ENCODE measurements at regions of chr12 and their contacts with region 1.

Region 1: GRCh38 chr12:8681041-8681902 is 16.5 kb upstream of the RIMKLB start:
- DNase-seq: peak; percentile 94
- H3K4me3 ChIP-seq: peak overlapping the region in 1 of 3 experiments; percentile 17
- H3K27ac ChIP-seq: peak overlapping the region; percentile 78
- H3K4me1 ChIP-seq: peaks cover 30% of the 10 kb centered on the region
- H3K27me3 ChIP-seq: no peaks in the 10 kb centered on the region
- CTCF ChIP-seq: no peak

Region 2: GRCh38 chr12:8572507-8572906 is 108.8 kb before region 1 on chr12:
- CTCF ChIA-PET with region 1: interaction called, 10 read pairs
- dilution Hi-C with region 1: no loop called
- in situ Hi-C with region 1: no loop called
- intact Hi-C with region 1: no loop called
- DNase-seq: peak; percentile 12
- H3K4me3 ChIP-seq: no peak overlapping the region
- H3K27ac ChIP-seq: no peak overlapping the region
- H3K4me1 ChIP-seq: no peaks in the 10 kb centered on the region
- H3K27me3 ChIP-seq: no peaks in the 10 kb centered on the region
- CTCF ChIP-seq: no peak

Region 3: DNA sequence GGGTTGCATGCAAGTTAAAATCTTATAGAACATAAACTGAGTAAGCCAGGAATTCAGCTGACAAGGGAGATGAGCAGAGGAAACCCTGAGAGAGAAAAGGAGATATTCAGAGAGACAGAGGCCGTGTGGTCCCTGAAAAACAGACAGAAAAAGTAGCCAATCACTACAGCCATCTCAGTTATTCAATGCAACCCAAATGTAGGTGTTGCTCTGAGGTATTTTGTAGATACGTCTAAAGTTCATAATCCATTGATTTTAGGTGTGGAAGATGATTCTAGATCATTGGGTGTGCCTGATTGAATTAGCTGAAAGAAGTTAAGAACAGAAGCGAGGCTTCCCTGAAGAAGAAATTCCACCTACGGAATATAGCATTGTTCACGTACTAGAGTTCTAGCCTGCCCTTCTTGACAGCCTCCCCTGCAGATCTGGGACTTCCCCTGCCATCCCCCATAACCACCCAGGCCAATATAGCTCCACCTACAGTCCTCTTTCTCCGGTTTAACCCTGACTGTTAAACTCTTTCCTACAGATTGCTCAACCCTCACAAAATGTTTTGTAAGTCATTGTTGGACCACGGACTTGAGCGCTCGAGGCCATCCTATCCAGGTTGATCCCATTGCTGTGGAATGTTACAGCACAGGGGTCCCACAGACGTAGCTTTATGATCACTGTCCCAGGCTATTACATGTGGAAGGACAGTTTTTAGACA is 90.3 kb before region 1 on chr12:
- CTCF ChIA-PET with region 1: no interaction called
- dilution Hi-C with region 1: no loop called
- in situ Hi-C with region 1: no loop called
- intact Hi-C with region 1: no loop called
- DNase-seq: peak; percentile 40
- H3K4me3 ChIP-seq: no peak overlapping the region
- H3K27ac ChIP-seq: no peak overlapping the region
- H3K4me1 ChIP-seq: peaks cover 4% of the 10 kb centered on the region
- H3K27me3 ChIP-seq: no peaks in the 10 kb centered on the region
- CTCF ChIP-seq: peak in 1 of 2 donors; percentile 16

Region 4: DNA sequence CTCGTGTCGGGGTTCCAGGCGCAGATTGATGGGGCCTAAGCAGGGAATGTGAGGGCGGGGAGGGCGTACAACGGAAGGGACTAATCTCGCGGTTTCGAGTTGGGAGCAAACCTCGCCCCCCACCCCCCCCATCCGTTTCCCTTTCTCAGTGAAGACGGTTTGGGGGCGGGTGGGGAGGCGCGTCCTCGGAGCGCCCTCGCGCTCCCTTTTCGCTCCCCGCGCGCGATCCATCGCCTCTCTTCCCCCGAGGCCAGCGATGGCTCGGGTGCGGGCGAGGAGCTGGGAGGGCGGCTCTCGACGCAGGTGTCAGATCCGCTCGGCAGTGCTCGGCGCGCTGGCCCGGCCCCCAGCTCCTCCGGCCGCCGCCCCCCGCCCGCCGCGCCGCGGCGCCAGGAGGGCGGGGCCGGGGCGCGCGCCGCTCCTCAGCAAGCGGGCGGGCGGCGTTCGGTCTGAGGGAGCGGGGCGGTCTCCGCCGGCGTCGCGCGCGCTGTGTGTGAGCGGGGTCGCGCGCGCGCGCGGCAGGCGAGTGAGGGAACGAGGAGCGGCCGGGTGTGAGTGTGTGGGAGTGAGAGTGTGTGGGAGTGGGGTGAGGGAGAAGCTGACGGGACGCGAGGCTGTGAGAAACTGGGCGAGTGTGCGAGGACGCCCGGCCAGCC is 16.3 kb after region 1 on chr12 and contains the start of gene RIMKLB:
- CTCF ChIA-PET with region 1: no interaction called
- dilution Hi-C with region 1: no loop called
- in situ Hi-C with region 1: no loop called
- intact Hi-C with region 1: loop called (anchors 2 kb)
- DNase-seq: peak; percentile 78
- H3K4me3 ChIP-seq: peak within 1 kb of the TSS; percentile 97 to 98 (median 97)
- H3K27ac ChIP-seq: peak within 1 kb of the TSS; percentile 85
- H3K4me1 ChIP-seq: peaks cover 14% of the 10 kb centered on the region
- H3K27me3 ChIP-seq: no peaks in the 10 kb centered on the region
- CTCF ChIP-seq: no peak
- total RNA-seq, gene RIMKLB: 27.2 to 30.2 TPM

Region 5: DNA sequence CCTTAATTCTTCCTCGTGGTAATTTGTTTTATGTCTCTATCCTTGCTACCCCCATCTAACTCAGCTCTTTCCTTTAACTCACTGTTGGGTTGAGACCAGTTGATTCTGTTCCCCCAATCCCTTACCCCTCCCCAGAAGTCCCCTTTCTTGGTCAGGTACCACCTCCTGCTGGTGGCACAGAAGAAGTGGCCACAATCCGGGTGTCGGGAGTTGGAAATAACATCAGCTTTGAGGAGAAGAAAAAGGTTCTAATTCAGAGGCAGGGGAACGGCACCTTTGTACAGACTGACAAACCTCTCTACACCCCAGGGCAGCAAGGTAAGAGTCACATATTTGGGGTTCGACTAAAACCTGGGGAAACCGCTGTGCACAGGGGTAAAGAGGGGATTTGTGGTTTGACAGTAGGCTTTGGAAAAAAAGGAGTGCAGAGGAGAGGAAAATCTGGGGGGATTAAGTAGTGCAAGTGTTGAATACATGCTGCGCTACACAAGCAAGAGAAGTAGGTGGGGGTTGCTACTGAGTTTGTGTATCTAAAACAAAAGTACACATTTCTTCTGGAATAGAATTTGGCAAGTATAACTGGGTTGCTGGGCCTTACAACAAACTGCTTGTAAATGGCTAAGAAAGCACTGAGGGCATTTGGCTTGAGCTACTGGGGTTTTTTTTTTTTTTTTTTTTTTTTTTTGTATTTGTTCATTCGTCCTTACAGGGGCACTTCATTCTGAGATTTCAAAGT is 142.5 kb after region 1 on chr12:
- CTCF ChIA-PET with region 1: interaction called, 4 read pairs
- dilution Hi-C with region 1: no loop called
- in situ Hi-C with region 1: no loop called
- intact Hi-C with region 1: loop called (anchors 1 kb)
- DNase-seq: no peak
- H3K4me3 ChIP-seq: no peak overlapping the region
- H3K27ac ChIP-seq: peak overlapping the region; percentile 82
- H3K4me1 ChIP-seq: peaks cover 38% of the 10 kb centered on the region
- H3K27me3 ChIP-seq: no peaks in the 10 kb centered on the region
- CTCF ChIP-seq: peak; percentile 39 to 51

Region 6: GRCh38 chr12:8890313-8891085 is 209.2 kb after region 1 on chr12:
- CTCF ChIA-PET with region 1: interaction called, 11 read pairs
- dilution Hi-C with region 1: no loop called
- in situ Hi-C with region 1: loop called in 1 of 2 experiments (anchors 10 kb)
- intact Hi-C with region 1: loop called (anchors 1 kb)
- DNase-seq: peak; percentile 17
- H3K4me3 ChIP-seq: peak overlapping the region; percentile 47 to 69 (median 48)
- H3K27ac ChIP-seq: no peak overlapping the region
- H3K4me1 ChIP-seq: no peaks in the 10 kb centered on the region
- H3K27me3 ChIP-seq: no peaks in the 10 kb centered on the region
- CTCF ChIP-seq: peak; percentile 63 to 84

Region 7: DNA sequence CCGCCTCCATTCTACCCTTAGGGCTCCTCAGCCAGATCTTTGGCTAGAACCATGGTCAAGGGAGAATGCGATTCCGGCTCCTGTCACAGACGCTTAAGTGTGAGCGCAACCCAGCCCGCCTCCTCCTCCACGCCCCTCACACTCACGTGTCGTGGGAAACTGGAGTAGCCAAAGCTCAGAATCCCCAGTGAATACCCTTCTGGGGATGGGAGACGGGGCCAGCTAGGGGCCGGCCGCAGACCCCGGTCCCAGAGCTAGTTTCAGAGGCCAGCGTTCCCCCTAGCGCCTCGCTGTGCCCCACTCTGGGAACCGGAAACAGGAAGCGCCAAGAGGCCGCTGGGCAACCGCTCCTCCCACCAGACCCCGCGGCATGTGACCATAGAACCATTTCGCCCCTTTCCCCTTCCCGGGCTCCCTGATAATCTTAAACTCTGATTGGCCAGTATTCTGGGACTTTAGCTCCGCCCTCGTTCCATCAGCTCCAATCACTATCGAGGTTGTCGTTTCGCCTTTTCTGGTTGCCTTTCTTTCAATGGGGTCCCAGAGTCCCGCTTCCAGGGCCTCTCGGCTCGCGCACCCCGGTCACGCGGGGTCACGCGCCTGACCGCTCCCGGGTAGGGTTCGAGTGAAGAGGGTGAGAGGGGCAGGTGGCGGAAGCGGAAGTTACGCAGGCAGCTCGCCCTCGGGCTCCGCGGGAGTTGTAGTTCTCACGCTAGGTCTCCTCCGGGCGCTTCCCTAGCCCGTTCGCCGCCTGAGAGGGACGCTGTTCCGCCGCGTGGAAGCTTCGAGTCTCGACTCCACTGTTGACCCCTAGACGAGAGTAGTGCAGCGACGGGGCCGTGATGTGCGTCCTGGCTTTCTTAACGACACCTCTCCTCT is 268.3 kb after region 1 on chr12 and contains the start of gene M6PR:
- CTCF ChIA-PET with region 1: no interaction called
- dilution Hi-C with region 1: no loop called
- in situ Hi-C with region 1: no loop called
- intact Hi-C with region 1: loop called (anchors 5 kb)
- DNase-seq: peak; percentile 97
- H3K4me3 ChIP-seq: peak within 1 kb of the TSS; percentile 72 to 97 (median 96)
- H3K27ac ChIP-seq: peak within 1 kb of the TSS; percentile 92
- H3K4me1 ChIP-seq: peaks cover 8% of the 10 kb centered on the region
- H3K27me3 ChIP-seq: no peaks in the 10 kb centered on the region
- CTCF ChIP-seq: peak; percentile 47 to 67
- total RNA-seq, gene M6PR: 117 to 165 TPM

Measured in mammary epithelial cell (primary cell).